H1 (cell line): ENCODE measurements at regions of chr6 and their contacts with region 1.

Region 1: GRCh38 chr6:28136585-28137504 is 4.8 kb upstream of the ZKSCAN8 start:
- DNase-seq: peak; percentile 60 to 87
- H3K4me3 ChIP-seq: peak overlapping the region; percentile 85 to 91 (median 87)
- H3K27ac ChIP-seq: peak overlapping the region; percentile 54
- H3K4me1 ChIP-seq: peaks cover 0 to 8% (median 2%) of the 10 kb centered on the region in 4 experiments; a peak in 3 of 7 replicates
- H3K27me3 ChIP-seq: peaks cover 0 to 3% (median 1%) of the 10 kb centered on the region in 4 experiments; a peak in 1 of 7 replicates
- CTCF ChIP-seq: no peak
- EP300 ChIP-seq: peak in 1 of 2 experiments; percentile 49; a peak in 1 of 3 replicates
- POLR2A ChIP-seq: peak; percentile 62 to 67
- RAD21 ChIP-seq: peak; percentile 22 to 23; a peak in 2 of 4 replicates

Region 2: GRCh38 chr6:28068067-28068466 is 68.8 kb before region 1 on chr6:
- CTCF ChIA-PET with region 1: no interaction called
- POLR2A ChIA-PET with region 1: no interaction called
- DNase-seq: no peak
- H3K4me3 ChIP-seq: no peak overlapping the region
- H3K27ac ChIP-seq: no peak overlapping the region
- H3K4me1 ChIP-seq: no peaks in the 10 kb centered on the region
- H3K27me3 ChIP-seq: no peaks in the 10 kb centered on the region; a peak in 2 of 7 replicates
- CTCF ChIP-seq: no peak
- EP300 ChIP-seq: no peak
- POLR2A ChIP-seq: no peak
- RAD21 ChIP-seq: no peak

Region 3: DNA sequence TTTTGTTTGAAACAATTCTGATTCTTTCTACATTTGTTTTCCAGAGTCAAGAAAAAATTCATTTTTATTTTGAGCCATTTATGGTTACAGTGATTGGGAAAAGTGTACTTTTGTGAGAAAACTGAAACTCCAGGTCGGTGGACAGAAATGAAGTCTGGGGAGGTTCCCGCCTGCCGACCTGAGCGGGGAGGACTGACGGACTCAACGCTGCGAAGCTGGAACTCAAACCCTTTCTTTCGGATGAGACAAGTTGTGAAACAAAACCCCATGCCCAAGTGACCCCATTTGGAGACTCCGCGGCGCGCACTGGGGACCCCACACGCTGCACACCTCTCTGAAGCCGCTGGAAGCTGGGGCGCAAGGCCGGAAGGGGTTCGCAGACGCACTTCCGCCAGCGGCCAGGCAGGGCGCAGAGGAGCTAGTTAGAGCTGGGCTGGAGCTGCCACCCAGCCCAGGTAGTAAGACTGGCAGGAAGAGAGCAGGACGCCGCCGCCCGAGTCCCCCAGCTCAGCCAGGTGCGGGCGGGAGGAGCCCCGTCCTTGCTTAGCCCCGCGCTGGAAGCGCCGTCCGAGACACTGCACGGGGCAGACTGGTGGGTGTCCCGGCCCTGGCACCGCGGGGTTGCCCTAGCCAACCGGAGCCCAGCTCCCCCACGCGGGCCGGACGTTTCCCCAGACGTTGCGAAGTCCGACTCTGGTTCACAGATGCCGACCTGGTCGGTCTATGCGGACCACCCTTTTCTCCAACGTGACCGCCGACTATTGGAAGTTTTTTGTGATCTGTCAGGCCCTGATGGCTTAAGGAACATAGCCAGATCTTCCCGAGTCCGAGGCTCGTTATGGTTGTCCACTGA is 32.2 kb before region 1 on chr6:
- CTCF ChIA-PET with region 1: no interaction called
- POLR2A ChIA-PET with region 1: interaction called, 10 read pairs
- DNase-seq: peak; percentile 72 to 88
- H3K4me3 ChIP-seq: peak overlapping the region; percentile 62 to 79 (median 76)
- H3K27ac ChIP-seq: no peak overlapping the region; the same call in 1 of the 2 replicates
- H3K4me1 ChIP-seq: peaks cover 0 to 6% (median 2%) of the 10 kb centered on the region in 4 experiments; a peak in 3 of 7 replicates
- H3K27me3 ChIP-seq: no peaks in the 10 kb centered on the region; a peak in 4 of 7 replicates
- CTCF ChIP-seq: peak; percentile 58 to 72 (median 62)
- EP300 ChIP-seq: no peak
- POLR2A ChIP-seq: peak in 1 of 2 experiments; percentile 80; a peak in 2 of 3 replicates
- RAD21 ChIP-seq: peak; percentile 35 to 61

Region 4: DNA sequence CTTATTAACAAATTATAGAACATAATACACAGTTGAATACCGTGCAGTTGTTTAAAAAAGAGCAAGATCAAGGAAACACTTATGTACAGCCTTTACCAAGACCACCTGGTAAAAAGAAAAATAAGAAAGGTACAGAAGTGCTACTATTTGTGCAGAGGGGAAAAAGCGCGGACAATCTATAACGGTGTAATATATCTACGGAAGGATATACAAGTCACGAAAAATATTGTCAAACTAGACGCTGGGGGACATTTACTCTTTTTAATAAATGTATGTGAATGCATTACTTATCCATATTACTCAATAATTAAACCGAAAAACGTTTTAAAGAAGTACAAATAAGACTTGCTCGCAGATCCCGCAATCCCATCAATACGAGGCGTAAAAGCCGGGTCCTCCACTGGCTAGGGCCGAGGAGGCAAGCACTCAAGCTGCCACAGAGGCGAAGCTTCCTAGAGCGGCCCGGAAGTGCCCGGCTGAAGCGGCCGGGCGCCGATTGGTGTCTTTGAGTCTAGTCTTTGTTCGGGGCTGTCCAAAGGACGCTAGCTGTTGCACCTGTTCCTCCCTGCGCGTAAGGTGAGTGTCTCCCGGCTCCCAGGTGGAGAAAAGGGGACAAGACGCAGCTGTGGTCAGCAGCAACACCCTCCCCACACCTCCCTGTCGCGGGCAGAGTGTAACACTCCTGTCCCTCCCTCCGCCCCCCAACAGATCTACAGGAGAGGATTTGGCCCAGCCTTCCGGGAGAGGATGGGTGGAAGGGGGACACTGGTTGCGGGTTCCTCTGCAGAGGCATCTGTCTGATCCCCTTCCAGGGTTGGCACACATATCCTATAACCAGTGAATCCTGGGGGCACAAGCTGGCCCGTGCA is 12.5 kb before region 1 on chr6 and contains the start of gene ZSCAN16:
- CTCF ChIA-PET with region 1: interaction called, 4 read pairs
- POLR2A ChIA-PET with region 1: interaction called, 48 read pairs
- DNase-seq: peak; percentile 64 to 90
- H3K4me3 ChIP-seq: peak within 1 kb of the TSS; percentile 62 to 93 (median 82)
- H3K27ac ChIP-seq: no peak within 1 kb of the TSS
- H3K4me1 ChIP-seq: no peaks in the 10 kb centered on the region
- H3K27me3 ChIP-seq: no peaks in the 10 kb centered on the region
- CTCF ChIP-seq: no peak
- EP300 ChIP-seq: no peak
- POLR2A ChIP-seq: peak; percentile 55 to 80
- RAD21 ChIP-seq: peak in 1 of 2 experiments; percentile 19; a peak in 1 of 4 replicates
- total RNA-seq, gene ZSCAN16: 7.4 and 9.4 TPM in 2 replicates